ENCODE measurements at regions of chr11 and their contacts with region 1.

Region 1: DNA sequence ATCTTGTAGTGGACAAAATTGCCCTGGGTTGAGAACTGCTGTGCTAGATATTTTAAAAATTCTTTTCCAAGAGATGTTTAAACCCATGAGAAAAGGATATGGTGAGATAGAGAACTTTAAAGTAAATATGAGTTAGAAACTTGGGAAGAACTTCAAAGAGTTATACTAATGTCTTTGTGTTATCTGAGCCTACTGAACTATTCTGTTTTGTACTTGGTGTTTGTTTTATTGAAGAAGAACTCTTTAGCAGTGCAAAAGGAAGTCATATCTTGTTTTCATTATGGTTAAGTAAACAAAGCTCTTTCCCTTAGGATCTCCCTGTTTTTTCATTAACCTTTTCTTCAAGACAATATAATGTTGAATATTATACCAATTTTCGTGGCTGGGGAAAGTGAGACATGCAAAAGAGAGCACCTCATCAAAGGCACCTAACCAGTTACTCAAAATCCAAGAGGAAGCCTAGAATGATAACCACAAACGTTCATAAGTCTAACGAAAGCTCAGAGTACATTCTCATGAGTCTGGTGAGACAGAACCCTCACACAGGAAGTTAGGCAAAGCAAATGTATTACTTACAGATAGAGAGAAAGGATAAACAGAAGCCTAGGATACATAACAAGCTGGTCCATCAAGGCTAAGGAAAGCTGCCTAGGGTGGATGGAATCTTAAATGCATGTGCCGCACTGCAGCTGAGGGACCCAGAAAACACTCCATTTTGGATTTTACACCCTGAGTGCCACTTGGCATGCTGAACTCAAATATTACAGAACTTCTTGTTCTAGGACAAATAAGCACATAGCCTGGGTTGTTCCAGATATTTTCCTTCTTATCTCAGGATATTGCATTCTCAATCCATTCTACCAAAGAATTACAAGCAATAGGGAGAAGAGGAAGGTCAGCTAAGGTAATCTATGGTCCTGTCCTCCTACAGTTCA is 112.5 kb upstream of the ANO3 start:
- DNase-seq: no peak
- H3K4me3 ChIP-seq: no peak overlapping the region
- H3K27ac ChIP-seq: peak overlapping the region in 1 of 5 donors; percentile 34
- H3K4me1 ChIP-seq: no peaks in the 10 kb centered on the region
- H3K27me3 ChIP-seq: no peaks in the 10 kb centered on the region
- CTCF ChIP-seq: no peak
- POLR2A ChIP-seq: no peak

Region 2: GRCh38 chr11:25988178-25988577 is 231.3 kb before region 1 on chr11:
- intact Hi-C with region 1: loop called in 1 of 2 experiments (anchors 5 kb)
- DNase-seq: no peak
- H3K4me3 ChIP-seq: no peak overlapping the region
- H3K27ac ChIP-seq: no peak overlapping the region
- H3K4me1 ChIP-seq: peaks cover 11 to 15% of the 10 kb centered on the region in 2 donors
- H3K27me3 ChIP-seq: no peaks in the 10 kb centered on the region
- CTCF ChIP-seq: no peak
- POLR2A ChIP-seq: no peak

Measured in adrenal gland (tissue), 19 donors.